A673 (cell line): ENCODE measurements at regions of chr20 and their contacts with region 1.

Region 1: GRCh38 chr20:31630187-31630790 is 7.4 kb upstream of the COX4I2 start:
- DNase-seq: no peak
- H3K4me3 ChIP-seq: no peak overlapping the region
- H3K27ac ChIP-seq: no peak overlapping the region
- H3K4me1 ChIP-seq: no peaks in the 10 kb centered on the region
- H3K27me3 ChIP-seq: no peaks in the 10 kb centered on the region
- CTCF ChIP-seq: no peak

Region 2: DNA sequence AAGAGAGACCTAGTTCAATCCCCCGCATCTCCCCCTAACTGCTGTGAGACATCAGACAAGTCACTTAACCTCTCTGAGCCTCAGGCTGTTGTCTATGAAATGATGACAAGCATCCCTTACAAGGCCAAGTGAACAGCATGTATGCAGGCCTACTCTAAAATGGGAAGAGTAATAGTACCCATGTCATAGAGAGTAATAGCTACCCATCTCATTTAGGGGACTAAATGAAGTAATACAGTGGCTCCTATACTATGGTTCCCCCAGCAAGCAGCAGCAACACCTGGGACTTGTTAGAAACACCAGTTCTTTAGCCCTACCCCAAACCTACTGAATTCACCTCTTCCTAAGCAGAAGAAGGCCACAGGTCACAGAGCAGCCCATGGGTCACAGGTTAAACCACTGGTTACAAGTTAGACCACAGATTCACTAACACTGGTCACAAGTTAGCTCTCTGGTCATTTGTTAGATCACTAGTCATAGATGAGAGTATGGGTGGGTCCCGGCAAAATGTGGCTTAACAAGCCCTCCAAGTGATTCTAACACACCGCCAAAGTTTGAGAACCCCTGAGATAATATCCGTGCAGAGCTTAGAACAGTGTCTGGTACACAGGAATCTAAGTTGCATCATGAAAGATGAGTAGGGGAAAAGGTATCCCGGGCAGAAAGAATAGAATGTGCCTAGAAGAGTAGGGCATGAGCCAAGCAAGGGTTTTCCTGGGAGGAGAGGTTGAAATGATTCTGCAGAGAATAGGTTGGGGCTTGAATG is 156.8 kb before region 1 on chr20:
- CTCF ChIA-PET with region 1: no interaction called
- POLR2A ChIA-PET with region 1: interaction called, 10 read pairs
- intact Hi-C with region 1: no loop called
- DNase-seq: no peak
- H3K4me3 ChIP-seq: no peak overlapping the region
- H3K27ac ChIP-seq: no peak overlapping the region
- H3K4me1 ChIP-seq: no peaks in the 10 kb centered on the region
- H3K27me3 ChIP-seq: peaks cover 36% of the 10 kb centered on the region
- CTCF ChIP-seq: no peak

Region 3: GRCh38 chr20:31560094-31560899 is 70.0 kb before region 1 on chr20:
- CTCF ChIA-PET with region 1: interaction called, 11 read pairs
- POLR2A ChIA-PET with region 1: no interaction called
- intact Hi-C with region 1: no loop called
- DNase-seq: peak; percentile 87
- H3K4me3 ChIP-seq: no peak overlapping the region
- H3K27ac ChIP-seq: peak overlapping the region; percentile 76
- H3K4me1 ChIP-seq: peaks cover 6% of the 10 kb centered on the region
- H3K27me3 ChIP-seq: no peaks in the 10 kb centered on the region
- CTCF ChIP-seq: peak; percentile 99

Region 4: DNA sequence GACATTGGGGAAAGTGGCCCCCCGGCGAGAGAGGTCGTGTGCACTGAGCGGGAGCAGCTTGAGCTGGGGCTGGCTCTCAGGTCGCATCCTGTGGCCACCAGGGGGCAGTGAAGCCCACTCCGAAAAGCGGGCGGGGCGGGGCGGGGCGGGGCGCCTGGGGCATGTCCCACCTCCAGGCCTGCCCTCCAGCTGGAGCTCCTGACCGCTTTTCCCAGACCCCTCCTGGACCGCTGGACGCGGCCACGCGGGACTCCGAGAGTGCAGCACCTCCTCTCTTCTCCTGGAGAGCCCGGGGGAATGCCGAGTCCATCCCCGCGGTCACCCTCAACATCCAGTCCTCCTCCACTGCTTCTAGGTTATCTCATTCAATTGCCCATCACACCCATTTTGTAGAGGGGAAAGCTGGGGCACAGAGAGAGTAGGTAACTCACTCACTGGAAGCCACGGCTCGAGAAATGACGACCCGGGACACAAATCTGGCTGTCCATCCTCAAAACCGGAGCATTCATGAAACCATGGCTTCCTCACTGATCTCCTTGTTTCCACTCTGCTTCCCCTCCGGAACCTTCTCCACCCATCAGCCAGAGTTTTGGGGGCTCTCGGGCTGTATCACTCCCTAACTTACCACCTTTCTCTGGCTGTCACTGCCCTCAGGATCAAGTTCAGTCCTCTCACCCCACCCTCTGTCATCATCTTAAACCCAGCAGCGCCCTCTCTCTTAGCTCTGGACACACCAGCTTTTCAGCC is 31.5 kb after region 1 on chr20:
- CTCF ChIA-PET with region 1: interaction called, 12 read pairs
- POLR2A ChIA-PET with region 1: no interaction called
- intact Hi-C with region 1: no loop called
- DNase-seq: peak; percentile 81
- H3K4me3 ChIP-seq: peak overlapping the region; percentile 44
- H3K27ac ChIP-seq: peak overlapping the region; percentile 29
- H3K4me1 ChIP-seq: peaks cover 10% of the 10 kb centered on the region
- H3K27me3 ChIP-seq: no peaks in the 10 kb centered on the region
- CTCF ChIP-seq: peak; percentile 80

Region 5: GRCh38 chr20:31723319-31724078 is 93.2 kb after region 1 on chr20:
- CTCF ChIA-PET with region 1: interaction called, 71 read pairs
- POLR2A ChIA-PET with region 1: no interaction called
- intact Hi-C with region 1: loop called (anchors 1 kb)
- DNase-seq: peak; percentile 99
- H3K4me3 ChIP-seq: peak overlapping the region; percentile 66
- H3K27ac ChIP-seq: peak overlapping the region; percentile 89
- H3K4me1 ChIP-seq: peaks cover 31% of the 10 kb centered on the region
- H3K27me3 ChIP-seq: no peaks in the 10 kb centered on the region
- CTCF ChIP-seq: peak; percentile 95

Region 6: DNA sequence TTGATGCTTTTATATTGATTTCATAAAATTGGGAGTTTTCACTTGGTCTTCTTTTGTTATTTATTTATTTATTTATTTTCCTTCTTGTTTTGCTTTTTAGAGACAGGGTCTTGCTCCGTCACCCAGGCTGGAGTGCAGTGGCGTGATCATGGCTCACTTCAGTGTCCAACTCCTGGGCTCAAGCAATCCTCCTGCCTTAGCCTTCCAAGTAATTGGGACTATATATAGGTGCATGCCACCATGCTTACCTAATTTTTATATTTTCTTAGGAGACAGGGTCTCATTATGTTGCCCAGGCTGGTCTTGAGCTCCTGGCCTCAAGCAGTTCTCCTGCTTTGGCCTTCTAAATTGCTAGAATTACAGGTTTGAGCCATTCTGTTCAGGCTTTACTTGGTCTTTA is 150.6 kb after region 1 on chr20:
- CTCF ChIA-PET with region 1: no interaction called
- POLR2A ChIA-PET with region 1: no interaction called
- intact Hi-C with region 1: no loop called
- DNase-seq: no peak
- H3K4me3 ChIP-seq: no peak overlapping the region
- H3K27ac ChIP-seq: no peak overlapping the region
- H3K4me1 ChIP-seq: no peaks in the 10 kb centered on the region
- H3K27me3 ChIP-seq: no peaks in the 10 kb centered on the region
- CTCF ChIP-seq: no peak

Region 7: GRCh38 chr20:32201296-32201976 is 571.1 kb after region 1 on chr20:
- CTCF ChIA-PET with region 1: interaction called, 11 read pairs
- POLR2A ChIA-PET with region 1: no interaction called
- intact Hi-C with region 1: no loop called
- DNase-seq: no peak
- H3K4me3 ChIP-seq: no peak overlapping the region
- H3K27ac ChIP-seq: no peak overlapping the region
- H3K4me1 ChIP-seq: peaks cover 22% of the 10 kb centered on the region
- H3K27me3 ChIP-seq: no peaks in the 10 kb centered on the region
- CTCF ChIP-seq: no peak